Endothelial cell of umbilical vein (primary cell): ENCODE measurements at regions of chr19 and their contacts with region 1.

Region 1: GRCh38 chr19:15251749-15252397 is 19.6 kb upstream of the EPHX3 start:
- DNase-seq: peak; percentile 73
- H3K4me3 ChIP-seq: no peak overlapping the region
- H3K27ac ChIP-seq: peak overlapping the region; percentile 69
- H3K4me1 ChIP-seq: peaks cover 42% of the 10 kb centered on the region
- H3K27me3 ChIP-seq: no peaks in the 10 kb centered on the region
- CTCF ChIP-seq: peak; percentile 56 to 60
- POLR2A ChIP-seq: no peak

Region 2: GRCh38 chr19:15062036-15062435 is 189.8 kb before region 1 on chr19:
- CTCF ChIA-PET with region 1: no interaction called
- POLR2A ChIA-PET with region 1: no interaction called
- dilution Hi-C with region 1: no loop called
- intact Hi-C with region 1: no loop called
- DNase-seq: no peak
- H3K4me3 ChIP-seq: no peak overlapping the region
- H3K27ac ChIP-seq: no peak overlapping the region
- H3K4me1 ChIP-seq: no peaks in the 10 kb centered on the region
- H3K27me3 ChIP-seq: no peaks in the 10 kb centered on the region
- CTCF ChIP-seq: no peak
- POLR2A ChIP-seq: no peak

Region 3: DNA sequence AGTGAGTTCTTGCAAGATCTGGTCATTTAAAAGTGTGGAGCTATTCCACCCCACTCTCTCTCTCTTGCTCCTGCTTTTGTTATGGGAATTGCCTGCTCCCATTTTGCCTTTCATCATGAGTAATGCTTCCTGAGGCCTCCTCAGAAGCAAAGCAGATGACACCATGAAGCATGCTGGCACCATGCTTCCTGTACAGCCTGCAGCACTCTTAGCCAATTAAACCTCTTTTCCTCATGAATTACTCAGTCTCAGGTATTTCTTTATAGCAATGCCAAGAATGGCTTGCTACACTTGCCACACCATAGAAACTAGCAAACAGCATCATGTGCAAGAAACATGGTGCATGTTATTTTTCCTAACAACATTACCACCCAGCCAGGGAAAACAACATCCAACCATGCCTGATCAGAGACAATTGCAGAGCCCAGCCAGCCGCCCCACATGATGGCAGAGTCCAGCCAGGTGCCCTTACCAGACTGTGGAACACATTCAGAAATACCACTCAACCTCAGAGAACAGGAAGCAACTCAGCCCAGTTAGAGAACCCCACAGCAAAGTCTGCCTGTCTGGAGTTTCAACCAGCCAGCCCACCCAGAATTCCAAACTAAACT is 107.7 kb before region 1 on chr19:
- CTCF ChIA-PET with region 1: no interaction called
- POLR2A ChIA-PET with region 1: no interaction called
- dilution Hi-C with region 1: no loop called
- intact Hi-C with region 1: no loop called
- DNase-seq: no peak
- H3K4me3 ChIP-seq: no peak overlapping the region
- H3K27ac ChIP-seq: no peak overlapping the region
- H3K4me1 ChIP-seq: no peaks in the 10 kb centered on the region
- H3K27me3 ChIP-seq: peaks cover 0 to 5% of the 10 kb centered on the region in 2 experiments
- CTCF ChIP-seq: no peak
- POLR2A ChIP-seq: no peak

Region 4: DNA sequence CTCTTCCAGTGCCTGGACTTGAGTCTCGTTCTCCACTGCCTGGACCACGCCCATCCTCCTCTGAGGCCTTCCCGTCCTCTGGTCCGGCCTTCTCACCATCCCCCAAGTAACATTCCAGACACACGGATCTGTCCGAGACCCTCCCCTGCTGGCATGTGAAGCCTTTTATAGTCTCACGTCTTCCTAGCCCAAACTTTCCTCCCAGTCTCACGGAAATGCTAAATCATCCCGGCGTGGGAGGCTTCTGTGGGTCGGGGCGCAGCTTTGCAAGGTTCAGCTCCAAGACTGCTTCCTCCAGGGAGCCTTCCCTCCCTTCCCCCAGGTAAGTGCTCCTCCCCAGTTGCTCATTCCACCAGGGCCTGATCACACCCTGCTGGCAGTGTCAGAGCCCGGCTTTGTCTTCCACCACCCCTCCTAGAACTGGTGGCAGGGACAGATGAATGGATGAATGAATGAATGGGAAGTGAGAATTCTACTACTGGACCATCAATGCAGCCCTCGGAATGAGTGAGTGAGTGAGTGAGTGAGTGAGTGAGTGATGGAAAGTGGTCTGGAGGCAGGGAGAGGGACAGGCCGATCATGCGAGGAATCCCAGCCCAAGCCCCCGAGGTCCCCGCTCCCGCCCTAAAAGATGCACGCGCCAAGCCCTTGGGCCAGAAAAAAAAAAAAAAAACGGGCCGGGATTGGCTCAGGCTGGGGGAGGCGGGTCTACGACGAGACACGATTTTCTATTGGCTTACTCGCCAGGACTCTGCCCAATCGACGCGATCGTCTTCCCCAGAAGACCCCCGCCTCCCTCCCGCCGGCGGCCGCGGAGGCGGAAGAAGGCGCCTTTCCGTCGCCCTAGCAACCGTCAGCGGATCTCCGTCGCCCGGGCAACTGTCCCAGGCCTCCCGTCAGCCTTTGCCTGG is 28.9 kb before region 1 on chr19:
- CTCF ChIA-PET with region 1: interaction called, 5 read pairs
- POLR2A ChIA-PET with region 1: no interaction called
- dilution Hi-C with region 1: no loop called
- intact Hi-C with region 1: loop called (anchors 2 kb)
- DNase-seq: peak; percentile 93
- H3K4me3 ChIP-seq: peak overlapping the region; percentile 43 to 52 (median 44)
- H3K27ac ChIP-seq: no peak overlapping the region
- H3K4me1 ChIP-seq: peaks cover 9% of the 10 kb centered on the region
- H3K27me3 ChIP-seq: no peaks in the 10 kb centered on the region
- CTCF ChIP-seq: no peak
- POLR2A ChIP-seq: no peak

Region 5: GRCh38 chr19:15234043-15234873 is 17.6 kb before region 1 on chr19:
- CTCF ChIA-PET with region 1: interaction called, 16 read pairs
- POLR2A ChIA-PET with region 1: no interaction called
- dilution Hi-C with region 1: no loop called
- intact Hi-C with region 1: no loop called
- DNase-seq: no peak
- H3K4me3 ChIP-seq: no peak overlapping the region
- H3K27ac ChIP-seq: no peak overlapping the region
- H3K4me1 ChIP-seq: no peaks in the 10 kb centered on the region
- H3K27me3 ChIP-seq: peaks cover 14% of the 10 kb centered on the region in 2 experiments
- CTCF ChIP-seq: no peak
- POLR2A ChIP-seq: no peak

Region 6: DNA sequence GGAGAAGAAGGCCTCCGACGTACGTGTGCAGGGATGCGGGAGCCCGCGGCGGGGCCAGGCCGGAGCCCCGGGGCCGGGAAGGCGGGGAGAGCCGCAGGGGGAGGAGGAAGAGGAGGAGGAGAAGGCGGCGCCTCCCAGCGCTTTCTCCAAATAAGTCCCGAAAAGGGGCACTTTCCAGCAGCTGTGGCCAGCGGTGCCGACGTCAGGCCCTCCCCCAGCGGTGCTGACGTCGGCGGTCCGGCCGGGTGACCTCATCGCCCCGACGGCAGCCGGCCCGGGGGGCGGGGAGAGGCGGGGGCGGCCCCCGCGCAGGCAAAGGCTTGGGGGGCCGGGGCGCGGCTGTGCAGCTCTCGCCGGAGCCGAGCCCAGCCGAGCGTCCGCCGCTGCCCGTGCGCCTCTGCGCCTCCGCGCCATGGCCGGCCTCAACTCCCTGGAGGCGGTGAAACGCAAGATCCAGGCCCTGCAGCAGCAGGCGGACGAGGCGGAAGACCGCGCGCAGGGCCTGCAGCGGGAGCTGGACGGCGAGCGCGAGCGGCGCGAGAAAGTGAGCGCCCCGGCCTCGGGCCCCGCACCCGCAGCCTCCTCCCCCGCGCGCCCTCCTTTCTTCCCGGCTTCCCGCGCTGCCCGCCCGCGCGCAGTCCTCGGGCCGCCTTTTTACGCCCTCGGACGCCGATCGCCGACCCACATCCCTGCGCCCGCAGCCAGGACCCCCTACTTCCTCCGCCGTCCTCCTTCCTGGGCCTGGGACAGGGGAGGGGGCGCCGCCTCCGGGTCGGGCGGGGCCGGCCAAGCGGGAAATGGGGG is 824.5 kb after region 1 on chr19 and contains the start of gene TPM4:
- CTCF ChIA-PET with region 1: no interaction called
- POLR2A ChIA-PET with region 1: no interaction called
- dilution Hi-C with region 1: no loop called
- intact Hi-C with region 1: loop called (anchors 2 kb)
- DNase-seq: peak; percentile 90
- H3K4me3 ChIP-seq: peak within 1 kb of the TSS; percentile 64 to 96 (median 95)
- H3K27ac ChIP-seq: peak within 1 kb of the TSS; percentile 100
- H3K4me1 ChIP-seq: peaks cover 39% of the 10 kb centered on the region
- H3K27me3 ChIP-seq: no peaks in the 10 kb centered on the region
- CTCF ChIP-seq: no peak
- POLR2A ChIP-seq: peak; percentile 89
- total RNA-seq, gene TPM4: 875 and 924 TPM in 2 replicates